ENCODE measurements at regions of chr5 and their contacts with region 1.

Region 1: DNA sequence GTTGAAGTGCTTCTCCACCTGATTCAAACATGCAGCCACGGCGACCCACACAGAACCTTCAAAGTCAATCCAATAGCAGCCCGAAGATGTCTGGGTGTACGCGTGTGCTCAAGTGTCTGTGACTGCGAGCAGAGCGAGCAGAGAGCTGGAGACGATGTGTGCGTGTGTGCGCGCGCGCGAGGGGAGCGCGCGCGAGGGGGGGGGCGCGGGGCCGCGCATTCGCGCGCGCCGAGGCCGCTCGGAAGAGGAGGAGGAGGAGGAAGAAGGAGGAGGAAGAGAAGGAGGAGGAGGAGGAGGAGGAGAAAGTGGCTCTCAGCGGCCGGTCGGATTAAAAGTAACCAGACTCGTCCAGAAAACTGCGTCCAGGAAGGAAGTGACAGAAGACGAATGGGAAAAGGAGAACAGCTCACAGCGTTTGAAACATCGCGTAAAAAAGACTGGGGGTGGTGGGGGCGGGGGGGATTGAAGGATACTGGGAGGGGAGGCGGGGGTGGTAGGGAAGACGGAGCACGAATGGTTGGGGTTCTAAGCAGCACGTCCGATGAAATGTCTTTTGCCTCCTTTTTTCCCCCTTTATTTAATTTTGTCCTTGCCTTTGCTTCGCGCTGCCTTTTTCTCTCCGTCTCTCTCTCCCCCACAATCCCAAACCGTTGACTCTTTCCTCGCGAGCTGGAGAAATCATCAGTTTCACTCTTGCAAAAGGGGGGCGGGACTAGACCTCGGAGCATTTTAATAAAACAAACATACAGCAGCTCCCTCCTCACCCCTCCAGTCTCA is at the start of gene MEF2C:
- DNase-seq: peak; percentile 77 to 91
- H3K4me3 ChIP-seq: peak within 1 kb of the TSS; percentile 60 to 73
- H3K27ac ChIP-seq: peak within 1 kb of the TSS; percentile 93 to 97
- H3K4me1 ChIP-seq: peaks cover 0 to 42% (median 5%) of the 10 kb centered on the region in 4 donors
- H3K27me3 ChIP-seq: no peaks in the 10 kb centered on the region
- CTCF ChIP-seq: no peak

Region 2: DNA sequence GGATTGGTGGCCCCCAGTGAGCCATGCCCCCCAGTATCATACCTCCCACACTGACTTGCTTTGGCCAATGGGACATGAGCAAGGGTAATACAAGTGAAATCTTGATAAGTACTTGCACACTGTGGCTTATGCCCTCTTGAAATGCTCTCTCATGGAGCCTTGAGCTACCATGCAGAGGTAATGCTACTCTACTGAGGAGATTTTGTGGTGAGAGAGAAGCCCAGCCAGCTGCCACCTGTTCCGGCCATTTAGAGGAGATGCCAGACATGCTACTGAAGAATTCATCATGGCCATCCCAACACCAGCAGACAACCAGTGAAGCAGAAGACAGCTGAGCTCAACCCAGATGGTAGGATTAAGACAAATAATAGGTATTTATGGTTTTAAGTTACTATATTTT is 299.8 kb before region 1 on chr5:
- intact Hi-C with region 1: no loop called
- DNase-seq: no peak
- H3K4me3 ChIP-seq: no peak overlapping the region
- H3K27ac ChIP-seq: no peak overlapping the region
- H3K4me1 ChIP-seq: no peaks in the 10 kb centered on the region
- H3K27me3 ChIP-seq: no peaks in the 10 kb centered on the region
- CTCF ChIP-seq: no peak

Region 3: DNA sequence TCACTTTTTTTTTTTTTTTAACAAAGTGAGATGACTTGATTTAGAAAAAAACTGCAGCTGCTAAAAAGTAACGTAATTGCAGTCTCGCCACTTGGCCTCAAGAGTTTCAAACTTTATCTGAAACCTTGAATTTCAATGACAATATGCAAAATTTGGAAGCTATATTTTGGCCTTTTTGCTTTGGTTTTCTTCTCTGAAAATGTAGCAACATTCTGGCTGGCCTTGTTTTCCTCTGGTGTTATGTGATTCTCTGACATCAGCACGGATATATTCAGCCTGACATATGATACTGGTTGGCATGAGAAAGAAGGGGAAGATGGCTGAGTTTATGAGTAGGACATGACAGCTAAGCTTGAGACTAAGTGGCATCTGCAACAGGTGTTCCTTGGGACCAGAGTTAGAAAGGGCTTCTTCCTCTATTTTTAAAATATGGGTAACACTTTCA is 136.8 kb before region 1 on chr5:
- intact Hi-C with region 1: no loop called
- DNase-seq: no peak
- H3K4me3 ChIP-seq: no peak overlapping the region
- H3K27ac ChIP-seq: no peak overlapping the region
- H3K4me1 ChIP-seq: peaks cover 0 to 27% (median 5%) of the 10 kb centered on the region in 4 donors
- H3K27me3 ChIP-seq: no peaks in the 10 kb centered on the region
- CTCF ChIP-seq: no peak

Region 4: GRCh38 chr5:88826646-88827585 is 56.3 kb before region 1 on chr5:
- intact Hi-C with region 1: loop called (anchors 5 kb)
- DNase-seq: peak in 1 of 2 donors; percentile 37
- H3K4me3 ChIP-seq: peak overlapping the region in 1 of 2 donors; percentile 30
- H3K27ac ChIP-seq: peak overlapping the region; percentile 70 to 73
- H3K4me1 ChIP-seq: peaks cover 0 to 89% (median 18%) of the 10 kb centered on the region in 4 donors
- H3K27me3 ChIP-seq: no peaks in the 10 kb centered on the region
- CTCF ChIP-seq: no peak

Region 5: GRCh38 chr5:88940713-88941112 is 57.5 kb after region 1 on chr5:
- intact Hi-C with region 1: loop called (anchors 10 kb)
- DNase-seq: no peak
- H3K4me3 ChIP-seq: no peak overlapping the region
- H3K27ac ChIP-seq: no peak overlapping the region
- H3K4me1 ChIP-seq: peaks cover 0 to 51% (median 10%) of the 10 kb centered on the region in 4 donors
- H3K27me3 ChIP-seq: no peaks in the 10 kb centered on the region
- CTCF ChIP-seq: no peak